Esophagus muscularis mucosa (tissue), 4 donors: ENCODE measurements at regions of chr3 and their contacts with region 1.

Region 1: GRCh38 chr3:183895296-183895695 is 10.6 kb upstream of the PARL start:
- DNase-seq: no peak
- H3K4me3 ChIP-seq: no peak overlapping the region
- H3K27ac ChIP-seq: no peak overlapping the region
- H3K4me1 ChIP-seq: peaks cover 0 to 4% (median 4%) of the 10 kb centered on the region in 4 donors
- H3K27me3 ChIP-seq: peaks cover 0 to 45% (median 0%) of the 10 kb centered on the region in 4 donors
- CTCF ChIP-seq: peak; percentile 74 to 82 (median 77)
- EP300 ChIP-seq: no peak
- POLR2A ChIP-seq: no peak

Region 2: DNA sequence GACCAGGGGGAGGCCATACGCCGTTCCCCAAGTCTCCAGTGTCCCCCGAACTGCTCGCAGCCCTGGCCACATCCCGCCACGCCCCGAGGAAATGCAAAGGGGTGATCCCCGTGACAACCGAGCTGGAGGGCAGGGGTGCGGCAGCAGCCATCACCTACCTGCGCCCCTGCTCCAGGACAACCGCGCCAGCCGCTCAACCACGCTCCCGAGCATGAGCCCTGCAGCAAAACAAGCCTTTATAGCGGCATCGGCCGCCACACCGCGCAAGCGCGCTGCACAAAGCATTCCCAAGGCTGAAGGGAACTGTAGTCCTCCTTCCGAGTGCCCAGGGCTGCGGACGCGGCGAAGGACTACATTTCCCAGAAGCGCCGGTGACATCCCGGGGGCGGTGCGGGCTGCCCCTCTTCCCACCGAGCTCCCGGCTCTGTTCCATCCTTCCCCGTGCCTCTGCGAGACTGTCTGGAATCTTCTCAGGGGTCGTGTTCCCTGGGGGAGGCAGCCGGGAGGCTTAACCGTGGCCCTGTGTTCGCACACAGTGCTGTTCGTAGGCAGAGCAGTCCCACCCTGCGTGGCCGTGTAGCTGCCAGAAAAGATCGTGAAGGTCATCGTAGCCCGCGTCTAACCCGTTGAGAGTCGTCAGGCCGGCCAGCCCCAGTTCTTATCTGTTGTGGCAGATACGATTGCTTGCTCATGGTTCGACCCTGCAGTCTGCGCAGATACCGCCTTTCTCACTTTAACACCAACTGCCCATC is 122.6 kb after region 1 on chr3 and contains the start of gene ABCC5:
- intact Hi-C with region 1: loop called (anchors 2 kb)
- DNase-seq: peak; percentile 97
- H3K4me3 ChIP-seq: peak within 1 kb of the TSS; percentile 87 to 99 (median 93)
- H3K27ac ChIP-seq: peak within 1 kb of the TSS; percentile 80 to 84 (median 84)
- H3K4me1 ChIP-seq: peaks cover 3 to 25% (median 21%) of the 10 kb centered on the region in 4 donors
- H3K27me3 ChIP-seq: no peaks in the 10 kb centered on the region
- CTCF ChIP-seq: peak in 2 of 3 experiments; percentile 24 to 55
- EP300 ChIP-seq: no peak
- POLR2A ChIP-seq: no peak
- total RNA-seq, gene ABCC5: 9.8 to 20.2 (median 17.6) TPM